HEK293 (cell line): ENCODE measurements at regions of chr5 and their contacts with region 1.

Region 1: DNA sequence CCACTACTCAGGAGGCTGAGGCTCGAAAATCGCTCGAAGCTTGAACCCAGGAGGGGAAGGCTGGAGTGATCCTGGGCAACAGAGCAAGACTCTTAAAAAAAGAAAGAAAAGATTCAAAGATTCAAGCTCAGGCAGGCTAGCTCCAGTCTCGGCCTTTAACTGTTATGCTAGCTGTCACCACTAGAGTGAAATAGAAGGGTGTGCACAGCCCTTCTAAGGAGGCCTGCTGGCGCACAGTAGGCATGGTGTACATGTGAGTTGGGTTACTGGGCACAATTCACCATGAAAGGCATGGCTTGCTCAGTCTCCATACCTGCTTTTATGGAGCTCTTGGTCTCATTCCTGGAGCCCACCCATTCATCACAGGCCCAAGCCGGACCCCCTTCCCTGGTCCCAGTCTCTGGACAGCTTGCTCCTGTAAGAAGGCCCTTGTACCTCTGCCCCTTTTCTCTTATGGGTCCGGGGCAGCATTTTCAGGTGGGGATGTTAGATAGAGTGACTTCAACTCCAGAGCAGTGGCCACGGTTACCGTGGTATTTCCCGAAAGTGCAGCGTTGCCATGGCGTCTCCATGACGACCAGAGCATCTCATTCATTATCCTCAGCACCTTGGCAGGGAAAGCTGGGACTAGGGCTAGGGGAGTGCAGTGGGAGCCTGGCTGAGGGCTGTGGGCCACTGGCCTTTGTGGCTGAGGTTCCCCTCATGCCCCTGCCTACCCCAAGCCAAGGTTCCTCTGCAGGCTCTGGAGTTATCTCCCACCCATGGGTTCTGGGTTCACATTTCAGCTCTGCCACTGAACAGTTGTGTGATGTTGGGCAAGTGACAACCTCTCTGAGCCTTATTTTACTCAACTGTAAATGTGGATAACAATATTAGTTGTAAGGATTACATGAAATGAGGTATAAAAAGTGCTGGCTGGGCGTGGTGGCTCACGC is 5.7 kb downstream of the NDST1 start:
- H3K4me3 ChIP-seq: no peak overlapping the region
- H3K27ac ChIP-seq: no peak overlapping the region
- H3K4me1 ChIP-seq: peaks cover 38% of the 10 kb centered on the region
- CTCF ChIP-seq: no peak

Region 2: GRCh38 chr5:150523472-150524350 is 10.1 kb after region 1 on chr5:
- CTCF ChIA-PET with region 1: interaction called, 13 read pairs
- POLR2A ChIA-PET with region 1: interaction called, 9 read pairs
- H3K4me3 ChIP-seq: no peak overlapping the region
- H3K27ac ChIP-seq: no peak overlapping the region
- H3K4me1 ChIP-seq: no peaks in the 10 kb centered on the region
- CTCF ChIP-seq: peak; percentile 66; the same call in 1 of the 2 replicates